Heart left ventricle (tissue), 16 donors: ENCODE measurements at regions of chr9 and their contacts with region 1.

Region 1: DNA sequence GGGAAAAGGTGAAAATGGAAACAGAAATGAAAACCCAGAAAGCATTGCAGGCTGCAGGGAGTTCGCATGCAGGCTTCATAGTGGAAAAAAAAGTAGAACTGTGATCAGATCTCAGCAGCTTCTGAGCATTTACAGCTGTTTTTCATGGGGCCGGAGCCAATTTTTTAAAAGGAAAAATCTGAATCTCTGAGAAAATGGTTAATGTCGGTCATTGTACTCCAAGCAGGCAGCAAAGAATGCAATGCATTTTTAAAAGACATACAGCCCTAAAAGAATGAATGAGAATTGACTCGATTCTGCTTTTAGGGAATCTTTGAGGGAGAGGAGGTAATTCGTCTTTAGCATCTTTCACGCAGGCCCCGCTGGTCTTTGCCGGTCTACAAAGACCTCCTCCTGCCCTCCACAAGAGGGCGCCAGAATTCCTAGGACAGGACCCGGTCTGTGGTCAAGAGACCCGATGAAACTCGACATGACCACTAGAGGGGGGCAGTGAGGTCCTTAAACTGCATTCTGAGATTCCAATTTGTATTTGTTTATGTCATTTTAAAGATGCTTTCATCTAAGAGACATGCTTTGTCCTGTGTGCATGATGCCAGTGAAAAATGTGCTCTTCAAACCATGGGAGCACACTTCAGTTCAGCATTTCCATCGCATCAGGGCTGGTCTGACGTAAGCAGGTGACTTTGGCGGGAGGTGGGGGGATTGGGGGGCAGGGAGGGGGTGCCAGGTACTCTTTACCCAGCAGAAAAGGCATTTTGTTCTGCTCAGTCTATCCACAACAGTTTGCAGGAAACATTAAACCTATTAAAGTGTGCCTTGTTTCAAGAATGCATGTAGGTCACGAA is 43.7 kb upstream of the TMEM252 start:
- DNase-seq: peak; percentile 82 to 91 (median 86)
- ATAC-seq: peak; percentile 91 to 98 (median 96)
- H3K4me3 ChIP-seq: no peak overlapping the region
- H3K27ac ChIP-seq: peak overlapping the region in 1 of 12 donors; percentile 27
- H3K4me1 ChIP-seq: no peaks in the 10 kb centered on the region
- H3K27me3 ChIP-seq: no peaks in the 10 kb centered on the region
- CTCF ChIP-seq: peak in 11 of 12 donors; percentile 95 to 100 (median 98)
- POLR2A ChIP-seq: no peak

Region 2: GRCh38 chr9:68678430-68678829 is 94.0 kb after region 1 on chr9:
- intact Hi-C with region 1: loop called in 1 of 10 experiments (anchors 5 kb)
- DNase-seq: peak in 2 of 5 donors; percentile 14 to 26
- ATAC-seq: peak in 3 of 4 donors; percentile 77 to 87 (median 82)
- H3K4me3 ChIP-seq: no peak overlapping the region
- H3K27ac ChIP-seq: peak overlapping the region in 1 of 12 donors; percentile 30
- H3K4me1 ChIP-seq: peaks cover 0 to 10% (median 0%) of the 10 kb centered on the region in 12 donors
- H3K27me3 ChIP-seq: peaks cover 0 to 7% (median 0%) of the 10 kb centered on the region in 9 donors
- CTCF ChIP-seq: peak in 8 of 12 donors; percentile 12 to 53 (median 40)
- POLR2A ChIP-seq: no peak

Region 3: GRCh38 chr9:68697851-68698250 is 113.4 kb after region 1 on chr9:
- intact Hi-C with region 1: loop called in 4 of 10 experiments (anchors 5 to 10 kb)
- DNase-seq: no peak
- ATAC-seq: no peak
- H3K4me3 ChIP-seq: no peak overlapping the region
- H3K27ac ChIP-seq: no peak overlapping the region
- H3K4me1 ChIP-seq: peaks cover 0 to 7% (median 0%) of the 10 kb centered on the region in 12 donors
- H3K27me3 ChIP-seq: no peaks in the 10 kb centered on the region
- CTCF ChIP-seq: no peak
- POLR2A ChIP-seq: no peak

Region 4: GRCh38 chr9:68779558-68780384 is 195.4 kb after region 1 on chr9:
- intact Hi-C with region 1: loop called in 2 of 10 experiments (anchors 10 kb)
- DNase-seq: peak; percentile 95 to 98 (median 97)
- ATAC-seq: peak; percentile 88 to 95 (median 94)
- H3K4me3 ChIP-seq: peak overlapping the region; percentile 49 to 89 (median 74)
- H3K27ac ChIP-seq: peak overlapping the region; percentile 83 to 97 (median 94)
- H3K4me1 ChIP-seq: peaks cover 8 to 77% (median 60%) of the 10 kb centered on the region in 12 donors
- H3K27me3 ChIP-seq: no peaks in the 10 kb centered on the region
- CTCF ChIP-seq: peak in 9 of 12 donors; percentile 28 to 67 (median 43)
- POLR2A ChIP-seq: peak; percentile 43 to 93

Region 5: GRCh38 chr9:68832853-68833518 is 248.6 kb after region 1 on chr9:
- intact Hi-C with region 1: no loop called
- DNase-seq: no peak
- ATAC-seq: peak in 1 of 4 donors; percentile 18
- H3K4me3 ChIP-seq: no peak overlapping the region
- H3K27ac ChIP-seq: peak overlapping the region in 6 of 12 donors; percentile 3 to 42 (median 28)
- H3K4me1 ChIP-seq: peaks cover 0 to 47% (median 14%) of the 10 kb centered on the region in 12 donors
- H3K27me3 ChIP-seq: no peaks in the 10 kb centered on the region
- CTCF ChIP-seq: no peak
- POLR2A ChIP-seq: no peak

Region 6: GRCh38 chr9:68851657-68852056 is 267.2 kb after region 1 on chr9:
- intact Hi-C with region 1: loop called in 4 of 10 experiments (anchors 5 to 10 kb)
- DNase-seq: no peak
- ATAC-seq: peak in 3 of 4 donors; percentile 44 to 68 (median 65)
- H3K4me3 ChIP-seq: no peak overlapping the region
- H3K27ac ChIP-seq: no peak overlapping the region
- H3K4me1 ChIP-seq: peaks cover 0 to 15% (median 0%) of the 10 kb centered on the region in 12 donors
- H3K27me3 ChIP-seq: no peaks in the 10 kb centered on the region
- CTCF ChIP-seq: no peak
- POLR2A ChIP-seq: no peak

Region 7: DNA sequence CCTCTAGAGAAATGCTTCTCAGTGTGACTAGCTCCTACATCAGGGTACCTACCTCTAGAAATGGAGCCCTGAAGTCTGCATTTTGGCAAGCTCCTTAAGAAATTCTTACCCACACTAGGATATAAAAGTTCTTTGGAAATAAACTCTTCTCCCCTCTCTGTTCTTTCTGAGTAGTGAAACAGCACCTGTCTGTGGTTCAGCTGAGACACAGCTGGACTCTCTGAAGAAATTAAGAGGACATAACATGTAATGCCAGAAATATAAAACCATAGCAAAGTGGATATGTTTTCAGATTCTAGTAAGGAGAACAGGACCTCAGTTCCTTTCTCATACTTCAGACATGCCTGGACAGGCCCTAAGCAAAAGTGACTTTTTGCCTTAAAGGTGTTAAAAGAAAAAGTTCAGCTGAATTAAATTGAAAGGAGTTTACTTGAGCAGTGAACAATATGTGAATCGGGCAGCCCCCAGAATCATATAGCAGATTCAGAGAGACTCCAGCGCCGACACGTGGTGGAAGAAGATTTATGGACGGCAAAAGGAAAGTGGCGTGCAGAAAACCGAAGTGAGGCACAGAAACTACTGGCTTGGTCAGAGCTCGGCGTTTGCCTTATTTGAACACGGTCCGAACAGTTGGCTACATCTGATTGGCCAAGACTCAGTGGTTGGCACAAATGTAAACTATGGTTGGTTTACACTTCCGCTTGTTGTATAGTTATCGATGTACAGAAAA is 365.0 kb after region 1 on chr9:
- intact Hi-C with region 1: loop called in 3 of 10 experiments (anchors 5 to 10 kb)
- DNase-seq: no peak
- ATAC-seq: peak in 3 of 4 donors; percentile 7 to 52 (median 38)
- H3K4me3 ChIP-seq: no peak overlapping the region
- H3K27ac ChIP-seq: no peak overlapping the region
- H3K4me1 ChIP-seq: peaks cover 0 to 7% (median 0%) of the 10 kb centered on the region in 12 donors
- H3K27me3 ChIP-seq: no peaks in the 10 kb centered on the region
- CTCF ChIP-seq: peak in 7 of 12 donors; percentile 9 to 28 (median 16)
- POLR2A ChIP-seq: no peak

Region 8: DNA sequence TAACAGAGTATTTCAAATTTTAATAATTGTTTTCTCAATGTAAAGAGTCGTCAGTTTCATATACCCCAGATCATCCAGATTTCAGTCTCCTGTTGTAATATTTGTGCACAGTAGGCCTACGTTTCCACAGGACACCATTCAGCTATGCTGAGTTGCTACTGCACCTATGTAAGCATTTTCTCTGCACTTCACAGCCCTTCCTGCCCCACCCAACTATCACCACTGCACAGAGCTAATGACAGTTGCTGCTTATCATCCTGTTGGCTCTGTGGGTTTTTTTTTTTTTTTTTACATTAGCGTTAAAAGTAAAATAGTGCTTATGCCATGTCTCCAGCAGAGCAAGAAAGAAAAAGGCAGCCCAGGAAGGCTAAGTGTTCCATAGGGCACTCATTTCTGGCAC is 435.4 kb after region 1 on chr9:
- intact Hi-C with region 1: loop called in 5 of 10 experiments (anchors 5 to 10 kb)
- DNase-seq: no peak
- ATAC-seq: peak in 1 of 4 donors; percentile 41
- H3K4me3 ChIP-seq: no peak overlapping the region
- H3K27ac ChIP-seq: no peak overlapping the region
- H3K4me1 ChIP-seq: peaks cover 0 to 7% (median 0%) of the 10 kb centered on the region in 12 donors
- H3K27me3 ChIP-seq: no peaks in the 10 kb centered on the region
- CTCF ChIP-seq: no peak
- POLR2A ChIP-seq: no peak